GM10248 (cell line): ENCODE measurements at regions of chr19 and their contacts with region 1.

Region 1: DNA sequence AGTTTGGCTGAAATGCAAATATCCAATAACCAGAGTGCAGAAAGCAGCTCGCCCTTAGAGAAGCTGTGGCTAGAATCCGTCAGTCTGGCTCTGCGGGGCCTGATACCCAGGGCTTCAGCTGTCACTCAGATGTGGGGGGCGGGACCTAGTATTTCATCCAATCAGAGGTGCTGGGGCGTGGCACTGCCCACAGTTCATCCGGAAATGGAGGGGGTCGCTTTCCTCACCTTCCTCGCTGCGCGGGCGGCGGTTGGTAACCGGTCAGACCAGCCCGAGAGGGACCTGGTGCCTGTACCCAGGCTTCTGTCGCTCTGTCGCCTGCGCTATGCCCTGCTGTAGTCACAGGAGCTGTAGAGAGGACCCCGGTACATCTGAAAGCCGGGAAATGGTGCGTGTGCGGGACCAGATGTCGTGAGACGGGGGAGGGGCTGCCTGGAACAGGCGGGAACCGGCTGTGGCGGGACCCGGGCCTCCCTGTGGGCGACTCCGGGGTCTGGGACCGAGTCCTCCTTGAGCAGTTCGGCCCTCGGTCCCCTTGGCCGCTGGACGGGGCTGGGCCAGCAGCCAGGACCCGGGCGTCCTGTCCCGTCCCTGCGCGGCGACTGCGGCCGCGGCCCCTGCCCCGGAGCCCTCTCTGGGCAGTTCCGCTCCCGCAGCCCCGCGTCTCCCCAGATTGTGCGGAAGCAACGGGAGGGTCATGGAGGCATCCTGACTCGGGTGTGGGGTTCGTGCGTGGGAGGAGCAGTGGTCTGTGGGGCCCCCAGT is at the start of gene ZNF700:
- DNase-seq: peak; percentile 94
- CTCF ChIP-seq: no peak

Region 2: GRCh38 chr19:11798391-11799330 is 126.4 kb before region 1 on chr19 and contains the start of gene ZNF491:
- CTCF ChIA-PET with region 1: interaction called, 52 read pairs
- POLR2A ChIA-PET with region 1: interaction called, 9 read pairs
- DNase-seq: peak; percentile 96
- CTCF ChIP-seq: peak; percentile 28

Region 3: GRCh38 chr19:11987405-11988281 is 62.6 kb after region 1 on chr19:
- CTCF ChIA-PET with region 1: interaction called, 92 read pairs
- POLR2A ChIA-PET with region 1: interaction called, 10 read pairs
- DNase-seq: peak; percentile 92
- CTCF ChIP-seq: no peak

Region 4: GRCh38 chr19:12052497-12053169 is 127.6 kb after region 1 on chr19 and contains the start of gene ZNF878:
- CTCF ChIA-PET with region 1: interaction called, 18 read pairs
- POLR2A ChIA-PET with region 1: interaction called, 9 read pairs
- DNase-seq: peak; percentile 87
- CTCF ChIP-seq: peak; percentile 35

Region 5: GRCh38 chr19:12139885-12140547 is 214.9 kb after region 1 on chr19 and contains the start of gene ZNF20:
- CTCF ChIA-PET with region 1: interaction called, 40 read pairs
- POLR2A ChIA-PET with region 1: no interaction called
- DNase-seq: peak; percentile 96
- CTCF ChIP-seq: peak; percentile 5

Region 6: DNA sequence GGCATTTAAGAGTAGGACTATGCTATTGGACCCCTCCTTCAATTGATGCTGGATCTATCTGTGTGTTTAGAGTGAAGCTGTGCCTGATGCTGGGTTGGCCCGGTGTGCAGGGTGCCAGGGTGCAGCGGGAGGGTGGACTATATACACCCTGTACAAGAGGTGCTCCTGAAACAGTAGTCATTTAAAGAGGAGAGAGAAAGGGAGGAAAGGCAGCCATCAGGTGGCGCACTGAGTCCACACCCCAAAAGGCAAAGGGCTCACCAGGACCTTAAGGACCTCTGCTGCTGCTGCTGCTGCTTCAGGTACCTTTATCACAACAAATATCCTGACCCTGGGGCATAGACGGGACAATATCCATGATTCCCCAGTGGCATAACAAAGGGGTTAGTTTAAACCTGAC is 277.2 kb after region 1 on chr19:
- CTCF ChIA-PET with region 1: no interaction called
- POLR2A ChIA-PET with region 1: no interaction called
- DNase-seq: no peak
- CTCF ChIP-seq: no peak

Region 7: GRCh38 chr19:12333162-12334159 is 408.4 kb after region 1 on chr19 and contains the start of gene ZNF563:
- CTCF ChIA-PET with region 1: interaction called, 12 read pairs
- POLR2A ChIA-PET with region 1: no interaction called
- DNase-seq: peak; percentile 94
- CTCF ChIP-seq: no peak